Psoas muscle (tissue), 8 donors: ENCODE measurements at regions of chr6 and their contacts with region 1.

Region 1: GRCh38 chr6:1609648-1610496 is at the start of gene FOXC1:
- DNase-seq: peak; percentile 90 to 91
- ATAC-seq: peak; percentile 84 to 91 (median 86)
- H3K4me3 ChIP-seq: peak within 1 kb of the TSS; percentile 78
- H3K27ac ChIP-seq: peak within 1 kb of the TSS; percentile 74
- H3K4me1 ChIP-seq: peaks cover 19% of the 10 kb centered on the region
- H3K27me3 ChIP-seq: peaks cover 0 to 90% (median 52%) of the 10 kb centered on the region in 3 donors
- CTCF ChIP-seq: no peak
- total RNA-seq, gene FOXC1: 1.5 to 2.7 (median 2.0) TPM

Region 2: DNA sequence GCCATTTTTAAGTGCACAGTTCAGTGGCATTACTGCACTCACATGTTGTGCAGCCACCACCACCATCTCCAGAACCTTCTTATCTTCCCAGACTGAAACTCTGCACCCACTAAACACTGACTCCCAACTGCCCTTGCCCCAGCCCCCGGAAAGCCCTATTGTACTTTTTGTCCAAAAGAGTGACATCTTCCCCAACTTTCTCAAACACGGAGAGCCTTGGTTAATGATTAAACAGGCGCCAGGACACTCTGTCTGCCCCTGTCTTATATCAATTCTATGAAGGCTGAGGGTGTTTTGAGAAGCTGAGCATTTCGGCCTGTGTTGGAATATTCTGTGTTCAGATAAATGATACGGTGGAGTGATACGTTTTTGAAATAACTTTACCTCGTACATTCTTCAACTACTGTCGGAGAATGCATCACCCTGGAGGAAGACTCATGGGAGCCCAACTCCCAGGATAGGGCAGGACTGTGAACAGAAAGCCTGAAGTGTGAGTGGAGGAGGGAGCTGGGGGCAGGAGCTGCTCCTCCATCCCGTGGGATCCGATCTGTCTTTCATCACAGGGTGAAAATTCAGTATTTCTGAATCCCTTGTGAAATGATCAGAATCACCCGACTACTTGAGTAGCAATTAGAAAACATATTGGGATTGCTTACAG is 68.9 kb before region 1 on chr6:
- intact Hi-C with region 1: no loop called
- DNase-seq: no peak
- ATAC-seq: no peak
- H3K4me3 ChIP-seq: no peak overlapping the region
- H3K27ac ChIP-seq: no peak overlapping the region
- H3K4me1 ChIP-seq: no peaks in the 10 kb centered on the region
- H3K27me3 ChIP-seq: peaks cover 0 to 2% (median 0%) of the 10 kb centered on the region in 3 donors
- CTCF ChIP-seq: no peak

Region 3: GRCh38 chr6:1701668-1702353 is 91.9 kb after region 1 on chr6:
- intact Hi-C with region 1: no loop called
- DNase-seq: peak in 1 of 2 donors; percentile 26
- ATAC-seq: peak; percentile 23 to 63 (median 50)
- H3K4me3 ChIP-seq: no peak overlapping the region
- H3K27ac ChIP-seq: no peak overlapping the region
- H3K4me1 ChIP-seq: peaks cover 5% of the 10 kb centered on the region
- H3K27me3 ChIP-seq: no peaks in the 10 kb centered on the region
- CTCF ChIP-seq: no peak

Region 4: GRCh38 chr6:2103644-2104523 is 494.0 kb after region 1 on chr6:
- intact Hi-C with region 1: loop called (anchors 2 to 10 kb)
- DNase-seq: no peak
- ATAC-seq: peak in 1 of 4 donors; percentile 65
- H3K4me3 ChIP-seq: peak overlapping the region; percentile 31
- H3K27ac ChIP-seq: no peak overlapping the region
- H3K4me1 ChIP-seq: peaks cover 7% of the 10 kb centered on the region
- H3K27me3 ChIP-seq: no peaks in the 10 kb centered on the region
- CTCF ChIP-seq: peak; percentile 55

Region 5: DNA sequence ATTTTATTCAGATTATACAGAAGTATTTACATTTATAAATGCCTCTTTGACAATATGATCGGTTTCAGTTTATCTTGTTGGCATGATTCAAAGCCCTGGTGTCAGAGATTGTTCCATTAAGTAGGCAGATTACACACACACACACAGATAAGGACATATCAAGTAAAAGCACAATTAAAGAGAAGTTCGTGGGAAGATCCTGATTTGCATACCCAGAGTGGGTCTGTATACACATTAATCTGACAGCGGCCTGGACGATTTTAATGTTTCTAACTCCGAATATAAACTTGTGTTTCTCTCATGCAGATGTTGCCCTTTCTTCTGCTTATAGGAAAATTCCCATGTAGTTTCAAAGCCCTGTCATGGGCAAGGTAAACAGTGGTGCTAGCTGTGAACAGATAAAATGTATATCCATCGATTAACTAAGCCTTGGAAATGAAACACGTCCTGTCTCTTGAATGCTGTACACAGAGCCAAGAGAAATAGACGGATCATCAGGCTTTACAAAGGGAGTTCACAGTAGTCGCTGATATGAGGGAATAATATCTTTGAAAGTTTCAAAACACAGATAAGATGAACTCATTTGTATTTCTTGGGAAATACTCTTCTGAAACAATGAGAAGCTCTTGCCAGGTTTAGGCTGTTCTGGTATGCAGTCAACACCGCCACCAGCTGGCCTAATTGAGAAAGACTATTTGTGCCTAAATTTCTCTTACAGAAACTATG is 743.7 kb after region 1 on chr6:
- intact Hi-C with region 1: loop called in 1 of 2 experiments (anchors 2 kb)
- DNase-seq: peak in 1 of 2 donors; percentile 51
- ATAC-seq: peak in 3 of 4 donors; percentile 65 to 79 (median 68)
- H3K4me3 ChIP-seq: no peak overlapping the region
- H3K27ac ChIP-seq: no peak overlapping the region
- H3K4me1 ChIP-seq: no peaks in the 10 kb centered on the region
- H3K27me3 ChIP-seq: no peaks in the 10 kb centered on the region
- CTCF ChIP-seq: peak; percentile 78

Region 6: GRCh38 chr6:2448820-2449571 is 839.1 kb after region 1 on chr6:
- intact Hi-C with region 1: loop called in 1 of 2 experiments (anchors 10 kb)
- DNase-seq: no peak
- ATAC-seq: peak in 3 of 4 donors; percentile 49 to 78 (median 54)
- H3K4me3 ChIP-seq: no peak overlapping the region
- H3K27ac ChIP-seq: no peak overlapping the region
- H3K4me1 ChIP-seq: peaks cover 6% of the 10 kb centered on the region
- H3K27me3 ChIP-seq: no peaks in the 10 kb centered on the region
- CTCF ChIP-seq: peak; percentile 58

Region 7: GRCh38 chr6:2749969-2750600 is 1140.2 kb after region 1 on chr6:
- intact Hi-C with region 1: loop called (anchors 10 kb)
- DNase-seq: peak; percentile 50 to 66
- ATAC-seq: peak in 2 of 4 donors; percentile 33 to 41
- H3K4me3 ChIP-seq: peak overlapping the region; percentile 54
- H3K27ac ChIP-seq: peak overlapping the region; percentile 68
- H3K4me1 ChIP-seq: peaks cover 46% of the 10 kb centered on the region
- H3K27me3 ChIP-seq: no peaks in the 10 kb centered on the region
- CTCF ChIP-seq: peak; percentile 90